ENCODE measurements at regions of chr7 and their contacts with region 1.

Region 1: GRCh38 chr7:74569501-74570075 is 87.9 kb upstream of the GTF2I start:
- DNase-seq: no peak
- ATAC-seq: no peak
- H3K4me3 ChIP-seq: no peak overlapping the region
- H3K27ac ChIP-seq: no peak overlapping the region
- H3K4me1 ChIP-seq: no peaks in the 10 kb centered on the region
- H3K27me3 ChIP-seq: no peaks in the 10 kb centered on the region
- CTCF ChIP-seq: no peak
- EP300 ChIP-seq: no peak
- POLR2A ChIP-seq: no peak
- RAD21 ChIP-seq: no peak

Region 2: DNA sequence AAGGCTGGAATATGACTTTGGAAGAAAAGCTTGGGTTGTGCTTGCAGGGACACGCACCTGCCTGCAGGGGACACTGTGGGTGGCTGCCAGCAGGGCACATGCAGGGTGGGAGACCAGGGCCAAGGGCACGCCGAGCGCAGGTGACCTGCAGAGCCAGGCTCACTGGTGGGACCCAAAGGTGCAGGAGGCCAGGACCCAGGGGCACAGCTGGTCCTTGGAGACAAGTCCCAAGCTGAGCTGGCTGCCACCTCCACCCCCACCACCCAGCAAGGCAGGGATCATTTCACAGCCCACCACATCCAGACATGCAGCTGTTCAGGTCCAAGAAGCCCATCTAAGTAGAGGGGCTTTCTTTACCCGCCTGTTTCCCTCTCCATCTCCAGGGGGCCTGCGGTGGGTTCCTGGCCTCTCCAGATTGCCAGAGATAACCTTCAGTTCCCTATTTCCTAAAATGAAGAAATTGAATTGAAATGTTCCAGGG is 294.1 kb before region 1 on chr7:
- CTCF ChIA-PET with region 1: no interaction called
- POLR2A ChIA-PET with region 1: no interaction called
- RAD21 ChIA-PET with region 1: no interaction called
- SMC1A ChIA-PET with region 1: no interaction called
- in situ Hi-C with region 1: no loop called
- intact Hi-C with region 1: no loop called
- DNase-seq: no peak
- ATAC-seq: peak; percentile 16
- H3K4me3 ChIP-seq: no peak overlapping the region
- H3K27ac ChIP-seq: no peak overlapping the region
- H3K4me1 ChIP-seq: peaks cover 63% of the 10 kb centered on the region
- H3K27me3 ChIP-seq: no peaks in the 10 kb centered on the region
- CTCF ChIP-seq: peak; percentile 58 to 87 (median 62)
- EP300 ChIP-seq: no peak
- POLR2A ChIP-seq: no peak
- RAD21 ChIP-seq: peak; percentile 58

Region 3: DNA sequence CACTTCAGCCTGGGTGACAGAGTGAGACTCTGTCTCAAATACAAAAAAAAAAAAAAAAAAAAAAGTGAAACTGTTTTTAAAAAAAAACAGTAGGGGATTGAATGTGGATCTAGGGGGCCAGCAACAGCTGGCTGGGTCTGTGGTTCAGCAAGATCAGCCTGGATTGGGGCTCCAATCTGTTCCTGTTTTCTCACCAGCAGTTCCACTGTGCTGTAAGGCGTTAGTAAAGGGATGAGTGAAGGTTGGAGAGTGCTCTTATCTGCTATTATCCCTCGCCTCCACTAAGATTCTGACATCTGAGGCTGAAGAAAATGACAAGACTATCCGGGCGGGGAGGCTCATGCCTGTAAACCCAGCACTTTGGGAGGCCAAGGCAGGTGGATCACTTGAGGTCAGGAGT is 157.5 kb before region 1 on chr7:
- CTCF ChIA-PET with region 1: interaction called, 70 read pairs
- POLR2A ChIA-PET with region 1: no interaction called
- RAD21 ChIA-PET with region 1: interaction called, 6 read pairs
- SMC1A ChIA-PET with region 1: interaction called, 3 read pairs
- in situ Hi-C with region 1: no loop called
- intact Hi-C with region 1: loop called (anchors 2 kb)
- DNase-seq: no peak
- ATAC-seq: no peak; the same call in 2 of the 3 replicates
- H3K4me3 ChIP-seq: no peak overlapping the region
- H3K27ac ChIP-seq: no peak overlapping the region
- H3K4me1 ChIP-seq: no peaks in the 10 kb centered on the region; the same call in 1 of the 2 replicates
- H3K27me3 ChIP-seq: no peaks in the 10 kb centered on the region
- CTCF ChIP-seq: no peak
- EP300 ChIP-seq: no peak
- POLR2A ChIP-seq: no peak
- RAD21 ChIP-seq: no peak

Region 4: GRCh38 chr7:74554178-74554577 is 15.4 kb before region 1 on chr7:
- CTCF ChIA-PET with region 1: interaction called, 15 read pairs
- POLR2A ChIA-PET with region 1: no interaction called
- RAD21 ChIA-PET with region 1: interaction called, 3 read pairs
- SMC1A ChIA-PET with region 1: interaction called, 9 read pairs
- in situ Hi-C with region 1: no loop called
- intact Hi-C with region 1: no loop called
- DNase-seq: no peak
- ATAC-seq: peak; percentile 25
- H3K4me3 ChIP-seq: no peak overlapping the region
- H3K27ac ChIP-seq: no peak overlapping the region
- H3K4me1 ChIP-seq: no peaks in the 10 kb centered on the region; the same call in 1 of the 2 replicates
- H3K27me3 ChIP-seq: no peaks in the 10 kb centered on the region
- CTCF ChIP-seq: no peak
- EP300 ChIP-seq: no peak
- POLR2A ChIP-seq: no peak
- RAD21 ChIP-seq: no peak